Breast epithelium (tissue), 4 donors: ENCODE measurements at regions of chr1 and their contacts with region 1.

Region 1: DNA sequence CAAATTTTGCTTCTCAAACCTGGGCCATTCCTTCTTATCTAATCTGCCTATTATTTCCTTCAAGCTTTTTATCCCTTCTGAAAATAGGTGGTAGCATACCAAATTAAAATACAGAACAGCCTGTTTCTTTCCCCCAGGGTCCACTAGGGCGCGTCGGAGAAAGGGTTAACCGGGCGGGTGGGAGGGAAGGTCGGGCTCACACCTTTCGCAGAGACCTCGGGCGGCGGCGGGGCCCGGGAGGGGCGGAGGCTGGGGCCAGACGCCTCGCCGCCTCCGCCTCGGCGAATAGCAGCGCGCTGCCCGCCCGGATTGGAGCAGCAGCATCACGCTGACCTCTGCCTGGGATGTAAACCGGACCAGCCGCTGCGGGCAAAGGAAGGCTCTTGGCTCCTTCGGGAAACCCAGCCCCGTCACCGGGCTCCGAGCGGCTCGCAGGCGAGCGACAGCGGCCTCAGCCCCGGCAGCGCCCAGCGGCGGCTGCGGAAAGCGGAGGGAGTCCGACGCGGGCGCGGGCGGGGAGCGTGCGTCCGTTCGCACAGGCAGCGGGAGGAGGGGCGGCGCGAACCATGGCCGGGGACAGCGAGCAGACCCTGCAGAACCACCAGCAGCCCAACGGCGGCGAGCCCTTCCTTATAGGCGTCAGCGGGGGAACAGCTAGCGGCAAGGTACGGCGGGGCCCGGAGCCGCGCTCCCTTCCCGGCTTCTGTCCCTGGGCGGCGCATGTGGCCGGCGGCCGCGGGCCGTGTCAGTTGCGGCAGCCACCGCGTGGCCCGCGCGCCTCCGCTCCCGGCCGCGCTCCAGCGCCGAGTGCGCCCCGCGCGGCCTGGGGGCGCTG is at the start of gene UCK2:
- DNase-seq: peak; percentile 70 to 77
- H3K4me3 ChIP-seq: peak within 1 kb of the TSS; percentile 61 to 88 (median 88)
- H3K27ac ChIP-seq: peak within 1 kb of the TSS; percentile 88 to 92
- H3K4me1 ChIP-seq: no peaks in the 10 kb centered on the region
- H3K27me3 ChIP-seq: no peaks in the 10 kb centered on the region
- CTCF ChIP-seq: peak in 1 of 3 donors; percentile 24
- POLR2A ChIP-seq: no peak
- total RNA-seq, gene UCK2: 13.6 to 51.1 (median 45.9) TPM

Region 2: DNA sequence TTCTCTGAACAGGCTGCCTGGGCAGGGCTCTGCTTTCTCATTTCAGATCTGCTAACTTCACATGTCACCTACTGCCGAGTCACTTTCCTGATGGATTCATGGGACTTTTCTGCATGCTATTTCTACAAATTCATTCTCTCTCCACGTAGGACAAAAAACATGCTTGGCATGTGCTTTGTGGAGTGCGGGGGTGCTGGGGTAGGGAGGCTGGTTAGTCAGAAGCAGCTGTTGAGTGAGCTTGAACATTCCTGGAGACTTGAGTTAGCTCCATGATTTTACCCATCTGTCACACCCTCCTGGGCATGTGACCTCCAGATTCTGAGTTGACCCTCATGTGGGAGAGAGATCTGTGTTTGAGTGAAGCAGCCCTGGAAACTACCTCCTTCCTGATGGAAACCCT is 71.4 kb after region 1 on chr1:
- intact Hi-C with region 1: loop called (anchors 10 kb)
- DNase-seq: peak in 1 of 2 donors; percentile 63
- H3K4me3 ChIP-seq: no peak overlapping the region
- H3K27ac ChIP-seq: peak overlapping the region; percentile 86
- H3K4me1 ChIP-seq: peaks cover 5 to 17% of the 10 kb centered on the region in 2 donors
- H3K27me3 ChIP-seq: no peaks in the 10 kb centered on the region
- CTCF ChIP-seq: no peak
- POLR2A ChIP-seq: no peak

Region 3: GRCh38 chr1:166322470-166322869 is 495.0 kb after region 1 on chr1:
- intact Hi-C with region 1: no loop called
- DNase-seq: no peak
- H3K4me3 ChIP-seq: no peak overlapping the region
- H3K27ac ChIP-seq: no peak overlapping the region
- H3K4me1 ChIP-seq: no peaks in the 10 kb centered on the region
- H3K27me3 ChIP-seq: no peaks in the 10 kb centered on the region
- CTCF ChIP-seq: no peak
- POLR2A ChIP-seq: no peak